ENCODE measurements at regions of chr11 and their contacts with region 1.

Region 1: GRCh38 chr11:133134314-133135173 is 397.8 kb downstream of the OPCML start:
- DNase-seq: peak; percentile 52 to 83 (median 73)
- ATAC-seq: peak; percentile 75 to 92
- H3K4me3 ChIP-seq: no peak overlapping the region
- H3K27ac ChIP-seq: no peak overlapping the region
- H3K4me1 ChIP-seq: no peaks in the 10 kb centered on the region
- H3K27me3 ChIP-seq: no peaks in the 10 kb centered on the region

Region 2: GRCh38 chr11:133239575-133239974 is 105.0 kb after region 1 on chr11:
- intact Hi-C with region 1: no loop called
- DNase-seq: no peak
- ATAC-seq: no peak
- H3K4me3 ChIP-seq: no peak overlapping the region
- H3K27ac ChIP-seq: no peak overlapping the region
- H3K4me1 ChIP-seq: no peaks in the 10 kb centered on the region
- H3K27me3 ChIP-seq: no peaks in the 10 kb centered on the region

Region 3: DNA sequence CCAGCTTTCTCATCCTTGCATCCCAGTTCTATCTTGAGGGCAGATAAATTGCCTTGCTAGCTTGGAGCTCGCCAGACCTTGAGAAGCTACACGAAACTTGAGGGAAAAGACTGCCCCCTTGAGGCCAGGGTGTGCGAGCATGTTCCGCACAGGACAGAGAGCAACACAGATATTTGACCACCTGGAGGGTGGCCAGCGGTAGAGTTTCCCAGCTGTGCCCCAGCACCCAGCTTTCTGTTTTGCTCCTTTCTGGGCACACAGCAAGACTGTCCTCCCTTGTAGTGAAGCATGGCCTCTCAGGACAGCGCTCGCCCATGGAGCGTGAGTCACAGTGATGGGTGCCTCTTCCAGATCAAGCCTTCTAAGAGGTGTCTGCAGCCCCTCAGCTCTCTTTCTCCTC is 687.2 kb after region 1 on chr11:
- intact Hi-C with region 1: loop called in 2 of 4 experiments (anchors 5 to 10 kb)
- DNase-seq: peak; percentile 60 to 82 (median 77)
- ATAC-seq: peak; percentile 75 to 81
- H3K4me3 ChIP-seq: no peak overlapping the region
- H3K27ac ChIP-seq: no peak overlapping the region
- H3K4me1 ChIP-seq: no peaks in the 10 kb centered on the region
- H3K27me3 ChIP-seq: no peaks in the 10 kb centered on the region

Region 4: DNA sequence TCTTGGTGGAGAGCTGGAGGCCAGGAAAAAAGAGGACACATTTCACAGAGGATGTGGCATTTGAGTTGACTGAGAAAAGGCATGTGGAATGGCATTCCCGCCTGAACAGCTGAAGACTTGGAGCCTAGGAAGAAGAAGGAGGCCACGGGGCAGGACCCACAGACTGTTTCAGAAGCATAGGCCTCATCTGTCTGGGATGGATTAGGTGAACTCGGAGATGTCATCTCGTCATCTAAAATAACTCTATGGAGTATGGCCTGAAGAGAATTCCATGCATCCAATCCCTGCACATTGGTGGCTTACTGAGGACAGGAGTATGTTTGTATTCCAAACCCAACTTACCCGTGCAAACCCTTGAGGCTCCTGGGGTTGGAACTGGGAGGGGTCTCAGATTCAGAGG is 694.3 kb after region 1 on chr11:
- intact Hi-C with region 1: loop called (anchors 5 to 10 kb)
- DNase-seq: no peak
- ATAC-seq: no peak
- H3K4me3 ChIP-seq: no peak overlapping the region
- H3K27ac ChIP-seq: no peak overlapping the region
- H3K4me1 ChIP-seq: no peaks in the 10 kb centered on the region
- H3K27me3 ChIP-seq: no peaks in the 10 kb centered on the region

Region 5: GRCh38 chr11:133834682-133835592 is 700.4 kb after region 1 on chr11:
- intact Hi-C with region 1: loop called in 3 of 4 experiments (anchors 5 to 10 kb)
- DNase-seq: no peak
- ATAC-seq: peak; percentile 71 to 88
- H3K4me3 ChIP-seq: no peak overlapping the region
- H3K27ac ChIP-seq: no peak overlapping the region
- H3K4me1 ChIP-seq: no peaks in the 10 kb centered on the region
- H3K27me3 ChIP-seq: no peaks in the 10 kb centered on the region